Activated CD8-positive, alpha-beta T cell treated with anti-CD3 and anti-CD28 coated beads, Interleukin-2, amount 10 ng/mL, durations not matched to agents 7 days and 5 days (primary cell): ENCODE measurements at regions of chr15 and their contacts with region 1.

Region 1: GRCh38 chr15:41774062-41774881 is at the start of gene MAPKBP1:
- DNase-seq: peak; percentile 99
- ATAC-seq: peak; percentile 92
- H3K4me3 Mint-ChIP-seq: peak within 1 kb of the TSS; percentile 93
- H3K27ac Mint-ChIP-seq: peak within 1 kb of the TSS; percentile 94
- H3K4me1 Mint-ChIP-seq: peaks cover 55% of the 10 kb centered on the region
- H3K27me3 Mint-ChIP-seq: no peaks in the 10 kb centered on the region
- total RNA-seq, gene MAPKBP1: 30.4 to 30.9 TPM

Region 2: GRCh38 chr15:41557673-41558399 is 216.4 kb before region 1 on chr15:
- CTCF ChIA-PET with region 1: interaction called, 13 read pairs
- POLR2A ChIA-PET with region 1: no interaction called
- DNase-seq: peak; percentile 76
- ATAC-seq: peak; percentile 76
- H3K4me3 Mint-ChIP-seq: peak overlapping the region; percentile 74
- H3K27ac Mint-ChIP-seq: peak overlapping the region; percentile 65
- H3K4me1 Mint-ChIP-seq: peaks cover 22% of the 10 kb centered on the region
- H3K27me3 Mint-ChIP-seq: peaks cover 47% of the 10 kb centered on the region

Region 3: DNA sequence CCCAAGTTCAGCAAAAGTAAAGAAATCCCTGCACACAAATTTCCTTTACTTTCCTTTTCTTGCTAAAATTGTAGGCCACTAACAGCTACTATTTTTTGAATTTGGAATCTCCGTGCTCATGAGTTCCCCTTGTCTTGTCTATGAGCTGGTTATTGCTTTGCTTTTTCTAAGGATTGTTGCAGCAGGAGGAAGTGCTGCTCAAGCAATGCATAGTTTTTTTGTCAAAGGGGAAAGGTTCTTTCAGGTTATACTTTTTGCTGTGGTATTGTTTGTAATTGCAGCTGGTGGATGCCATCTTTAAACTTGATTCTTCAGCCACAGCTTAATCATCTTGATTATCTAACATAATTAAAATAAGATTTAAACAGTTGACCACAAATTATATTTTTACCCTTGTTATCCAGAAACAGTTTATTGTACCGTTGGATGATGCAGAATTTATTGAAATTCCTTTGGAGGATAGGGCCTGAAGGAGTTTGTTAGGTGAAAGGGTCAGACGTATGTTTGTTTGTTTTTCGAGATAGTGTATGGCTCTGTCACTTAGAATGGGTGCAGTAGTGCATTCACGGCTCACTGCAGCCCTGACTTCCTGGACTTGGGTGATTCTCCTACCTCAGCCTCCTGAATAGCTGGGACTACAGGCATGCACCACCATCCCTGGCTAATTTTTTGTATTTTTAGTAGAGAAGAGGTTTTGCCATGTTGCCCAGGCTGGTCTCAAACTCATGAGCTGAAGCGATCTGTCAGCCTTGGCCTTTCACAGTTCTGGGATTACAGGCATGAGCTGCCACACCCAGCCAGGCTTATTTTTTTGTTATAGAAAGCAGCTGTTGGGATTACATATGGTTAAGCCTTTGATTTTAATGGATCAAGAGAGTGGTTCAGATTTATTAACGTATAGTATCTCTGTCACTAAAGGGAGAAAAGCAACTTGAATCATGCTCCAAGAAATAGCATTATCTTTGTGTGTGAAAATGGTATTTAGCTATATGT is 102.3 kb before region 1 on chr15:
- CTCF ChIA-PET with region 1: interaction called, 10 read pairs
- POLR2A ChIA-PET with region 1: no interaction called
- DNase-seq: no peak
- ATAC-seq: no peak
- H3K4me3 Mint-ChIP-seq: no peak overlapping the region
- H3K27ac Mint-ChIP-seq: no peak overlapping the region
- H3K4me1 Mint-ChIP-seq: peaks cover 14% of the 10 kb centered on the region
- H3K27me3 Mint-ChIP-seq: no peaks in the 10 kb centered on the region

Region 4: DNA sequence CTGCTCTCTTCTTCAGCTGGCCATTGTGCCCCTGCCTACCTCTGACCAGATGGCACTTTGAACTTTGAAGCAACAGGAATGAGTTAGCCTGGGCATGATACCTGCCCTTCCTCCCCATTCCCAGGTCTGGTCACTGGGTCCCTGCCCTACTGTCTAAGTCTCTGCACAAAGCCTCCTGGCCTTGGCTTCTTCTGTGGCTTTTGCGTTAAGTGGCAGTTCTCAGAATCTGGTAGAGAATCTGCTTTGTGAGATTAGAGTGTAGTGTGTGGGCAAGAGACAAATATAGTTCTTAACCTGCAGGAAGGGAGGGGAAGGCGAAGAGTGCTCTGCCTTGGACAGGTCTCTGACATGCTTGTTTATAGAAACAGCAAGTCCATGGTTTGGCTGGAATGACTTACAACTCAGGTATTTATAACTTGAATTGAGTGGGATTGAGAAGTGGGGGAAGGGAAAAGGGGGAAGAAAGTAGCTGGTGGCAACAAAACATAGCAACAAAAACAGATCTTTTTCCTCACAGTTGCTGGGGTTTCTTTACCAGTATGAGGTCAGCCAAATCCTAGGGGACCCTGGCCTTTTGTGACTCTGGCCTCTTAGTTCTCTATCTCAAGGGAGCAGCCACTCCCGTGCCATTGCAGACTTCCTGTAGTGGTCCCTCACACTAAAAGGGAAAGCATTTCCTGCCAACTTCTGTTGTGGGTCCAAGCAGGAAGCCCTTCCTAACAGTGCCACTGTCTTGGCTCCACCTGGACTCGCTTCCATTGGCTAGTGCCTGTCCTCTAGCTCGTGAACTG is 16.7 kb after region 1 on chr15:
- CTCF ChIA-PET with region 1: interaction called, 82 read pairs
- POLR2A ChIA-PET with region 1: no interaction called
- DNase-seq: peak; percentile 39
- ATAC-seq: peak; percentile 77
- H3K4me3 Mint-ChIP-seq: peak overlapping the region; percentile 62
- H3K27ac Mint-ChIP-seq: peak overlapping the region; percentile 83
- H3K4me1 Mint-ChIP-seq: peaks cover 54% of the 10 kb centered on the region
- H3K27me3 Mint-ChIP-seq: no peaks in the 10 kb centered on the region

Region 5: DNA sequence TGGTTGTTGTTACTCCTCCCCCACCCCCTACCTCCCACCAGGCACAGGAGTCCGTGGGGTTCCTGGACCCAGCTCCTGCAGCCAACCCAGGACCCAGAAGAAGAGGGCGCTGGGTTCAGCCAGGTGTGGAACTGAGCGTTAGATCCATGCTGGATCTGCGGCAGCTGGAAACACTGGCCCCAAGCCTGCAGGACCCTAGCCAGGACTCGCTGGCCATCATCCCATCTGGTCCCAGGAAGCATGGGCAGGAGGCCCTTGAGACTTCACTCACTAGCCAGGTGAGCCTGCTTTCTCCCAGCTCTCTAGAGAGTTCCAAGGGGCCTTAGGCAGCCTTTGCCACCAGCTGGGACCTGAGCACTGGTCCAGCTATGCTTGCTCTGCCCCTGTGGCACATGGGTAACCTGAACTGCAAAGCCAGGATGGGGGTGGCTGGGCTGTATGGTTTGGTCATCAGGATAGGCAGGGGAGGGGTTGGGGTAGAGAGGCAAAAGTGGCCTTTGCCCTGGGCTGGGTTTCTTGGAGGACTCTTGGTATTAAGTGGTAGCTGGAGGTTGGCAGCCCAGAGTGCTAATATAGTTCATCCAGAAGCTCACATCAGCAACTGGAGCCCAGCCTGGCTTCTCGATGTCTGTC is 46.6 kb after region 1 on chr15:
- CTCF ChIA-PET with region 1: interaction called, 333 read pairs
- POLR2A ChIA-PET with region 1: interaction called, 3 read pairs
- DNase-seq: no peak
- ATAC-seq: no peak
- H3K4me3 Mint-ChIP-seq: no peak overlapping the region
- H3K27ac Mint-ChIP-seq: no peak overlapping the region
- H3K4me1 Mint-ChIP-seq: no peaks in the 10 kb centered on the region
- H3K27me3 Mint-ChIP-seq: no peaks in the 10 kb centered on the region

Region 6: DNA sequence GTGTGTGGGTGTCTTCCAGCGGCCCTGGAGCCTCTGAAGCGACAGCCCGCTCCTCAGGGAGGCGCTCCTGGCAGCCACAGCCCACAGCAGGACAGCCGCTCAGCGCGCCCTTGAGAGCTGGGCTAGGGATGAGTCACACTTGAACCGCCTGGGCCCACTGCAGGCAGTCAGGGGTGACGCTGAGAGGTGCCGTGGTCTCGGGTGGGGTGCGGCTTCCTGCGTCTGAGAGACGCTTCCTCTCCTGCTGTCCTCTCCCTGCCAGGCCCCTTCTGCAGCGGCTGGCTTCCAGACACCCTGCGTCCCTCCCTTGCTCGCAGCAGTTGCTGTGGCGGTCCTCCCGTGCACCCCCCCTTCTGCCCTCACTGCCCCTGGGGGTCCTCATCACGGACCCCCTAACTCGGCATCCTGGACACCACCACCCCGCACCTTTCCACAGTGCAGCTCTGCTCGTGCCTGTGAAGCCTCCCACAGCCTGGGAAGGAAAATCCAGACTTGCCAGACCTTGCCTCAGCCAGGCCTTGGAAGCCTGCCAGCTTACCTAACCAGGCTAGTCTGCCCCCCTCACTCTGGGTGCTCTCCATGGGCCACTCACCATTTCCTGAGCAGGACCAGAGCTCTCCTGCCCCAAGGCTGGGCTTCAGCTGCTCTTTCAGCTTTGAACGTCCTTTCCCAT is 120.7 kb after region 1 on chr15:
- CTCF ChIA-PET with region 1: interaction called, 157 read pairs
- POLR2A ChIA-PET with region 1: interaction called, 4 read pairs
- DNase-seq: peak; percentile 94
- ATAC-seq: peak; percentile 100
- H3K4me3 Mint-ChIP-seq: peak overlapping the region; percentile 44
- H3K27ac Mint-ChIP-seq: peak overlapping the region; percentile 96
- H3K4me1 Mint-ChIP-seq: peaks cover 51% of the 10 kb centered on the region
- H3K27me3 Mint-ChIP-seq: no peaks in the 10 kb centered on the region

Region 7: GRCh38 chr15:41972253-41973242 is 198.3 kb after region 1 on chr15 and contains the start of gene EHD4:
- CTCF ChIA-PET with region 1: interaction called, 14 read pairs
- POLR2A ChIA-PET with region 1: no interaction called
- DNase-seq: peak; percentile 97
- ATAC-seq: peak; percentile 93
- H3K4me3 Mint-ChIP-seq: peak within 1 kb of the TSS; percentile 83
- H3K27ac Mint-ChIP-seq: peak within 1 kb of the TSS; percentile 87
- H3K4me1 Mint-ChIP-seq: peaks cover 44% of the 10 kb centered on the region
- H3K27me3 Mint-ChIP-seq: peaks cover 28% of the 10 kb centered on the region
- total RNA-seq, gene EHD4: 6.9 to 8.0 TPM